ENCODE measurements at regions of chr2 and their contacts with region 1.

Region 1: DNA sequence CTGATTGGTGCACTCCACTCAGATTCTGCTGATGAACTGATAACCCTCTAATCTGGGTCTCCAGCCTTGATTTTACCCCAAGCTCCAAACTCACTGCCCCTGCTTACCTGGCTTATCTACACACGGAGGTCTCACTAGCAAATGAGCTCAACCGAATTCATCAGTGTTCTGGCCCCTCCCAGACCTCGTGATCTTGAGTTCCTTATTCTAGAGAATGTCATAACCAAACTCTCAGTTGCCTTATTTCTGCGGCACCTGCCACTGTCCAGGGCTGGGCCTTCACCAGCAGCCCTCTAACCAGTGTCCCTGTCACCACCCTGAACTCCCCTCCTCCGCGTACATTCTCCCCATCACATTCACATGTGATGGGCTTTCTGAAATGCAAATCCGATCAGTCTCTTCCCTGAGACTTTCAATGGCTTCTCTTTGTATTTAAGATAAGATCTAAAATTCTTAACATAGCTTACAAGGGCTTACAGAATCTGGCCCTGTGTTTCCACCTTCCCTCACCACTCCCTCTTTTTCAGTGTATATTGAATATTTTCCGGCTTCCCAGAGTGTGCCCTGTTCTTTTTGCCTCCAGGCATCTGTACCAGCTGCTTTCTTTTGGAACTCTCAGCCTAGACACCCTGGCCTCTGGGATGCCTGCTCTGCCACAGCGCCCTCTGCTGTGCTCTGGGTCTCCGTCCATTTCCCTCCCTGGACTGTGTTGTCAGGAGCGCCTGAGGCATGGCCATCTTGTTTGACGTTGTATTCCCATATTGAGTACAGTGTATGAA is 31.1 kb downstream of the NAB1 start:
- DNase-seq: peak; percentile 55
- ATAC-seq: no peak
- H3K4me3 Mint-ChIP-seq: peak overlapping the region; percentile 9
- H3K27ac Mint-ChIP-seq: peak overlapping the region; percentile 72
- H3K4me1 Mint-ChIP-seq: peaks cover 51% of the 10 kb centered on the region
- H3K27me3 Mint-ChIP-seq: no peaks in the 10 kb centered on the region
- CTCF ChIP-seq: peak; percentile 72

Region 2: GRCh38 chr2:190408538-190409271 is 271.3 kb before region 1 on chr2:
- CTCF ChIA-PET with region 1: interaction called, 8 read pairs
- POLR2A ChIA-PET with region 1: no interaction called
- intact Hi-C with region 1: loop called (anchors 10 kb)
- DNase-seq: peak; percentile 79
- ATAC-seq: peak; percentile 57
- H3K4me3 Mint-ChIP-seq: peak overlapping the region; percentile 88
- H3K27ac Mint-ChIP-seq: peak overlapping the region; percentile 95
- H3K4me1 Mint-ChIP-seq: peaks cover 34% of the 10 kb centered on the region
- H3K27me3 Mint-ChIP-seq: no peaks in the 10 kb centered on the region
- CTCF ChIP-seq: no peak

Region 3: GRCh38 chr2:190583507-190584337 is 96.3 kb before region 1 on chr2:
- CTCF ChIA-PET with region 1: no interaction called
- POLR2A ChIA-PET with region 1: no interaction called
- intact Hi-C with region 1: no loop called
- DNase-seq: no peak
- ATAC-seq: no peak
- H3K4me3 Mint-ChIP-seq: no peak overlapping the region
- H3K27ac Mint-ChIP-seq: no peak overlapping the region
- H3K4me1 Mint-ChIP-seq: peaks cover 6% of the 10 kb centered on the region
- H3K27me3 Mint-ChIP-seq: no peaks in the 10 kb centered on the region
- CTCF ChIP-seq: no peak

Region 4: GRCh38 chr2:190648289-190649034 is 31.5 kb before region 1 on chr2:
- CTCF ChIA-PET with region 1: interaction called, 26 read pairs
- POLR2A ChIA-PET with region 1: interaction called, 8 read pairs
- intact Hi-C with region 1: loop called (anchors 2 kb)
- DNase-seq: peak; percentile 78
- ATAC-seq: peak; percentile 65
- H3K4me3 Mint-ChIP-seq: peak overlapping the region; percentile 68
- H3K27ac Mint-ChIP-seq: peak overlapping the region; percentile 73
- H3K4me1 Mint-ChIP-seq: peaks cover 30% of the 10 kb centered on the region
- H3K27me3 Mint-ChIP-seq: no peaks in the 10 kb centered on the region
- CTCF ChIP-seq: no peak

Region 5: GRCh38 chr2:190662754-190663153 is 17.2 kb before region 1 on chr2:
- CTCF ChIA-PET with region 1: interaction called, 10 read pairs
- POLR2A ChIA-PET with region 1: interaction called, 4 read pairs
- intact Hi-C with region 1: no loop called
- DNase-seq: no peak
- ATAC-seq: no peak
- H3K4me3 Mint-ChIP-seq: no peak overlapping the region
- H3K27ac Mint-ChIP-seq: no peak overlapping the region
- H3K4me1 Mint-ChIP-seq: peaks cover 53% of the 10 kb centered on the region
- H3K27me3 Mint-ChIP-seq: no peaks in the 10 kb centered on the region
- CTCF ChIP-seq: no peak

Region 6: GRCh38 chr2:190695739-190696138 is 15.7 kb after region 1 on chr2:
- CTCF ChIA-PET with region 1: interaction called, 52 read pairs
- POLR2A ChIA-PET with region 1: interaction called, 5 read pairs
- intact Hi-C with region 1: no loop called
- DNase-seq: peak; percentile 65
- ATAC-seq: peak; percentile 91
- H3K4me3 Mint-ChIP-seq: no peak overlapping the region
- H3K27ac Mint-ChIP-seq: peak overlapping the region; percentile 61
- H3K4me1 Mint-ChIP-seq: peaks cover 30% of the 10 kb centered on the region
- H3K27me3 Mint-ChIP-seq: no peaks in the 10 kb centered on the region
- CTCF ChIP-seq: no peak

Region 7: DNA sequence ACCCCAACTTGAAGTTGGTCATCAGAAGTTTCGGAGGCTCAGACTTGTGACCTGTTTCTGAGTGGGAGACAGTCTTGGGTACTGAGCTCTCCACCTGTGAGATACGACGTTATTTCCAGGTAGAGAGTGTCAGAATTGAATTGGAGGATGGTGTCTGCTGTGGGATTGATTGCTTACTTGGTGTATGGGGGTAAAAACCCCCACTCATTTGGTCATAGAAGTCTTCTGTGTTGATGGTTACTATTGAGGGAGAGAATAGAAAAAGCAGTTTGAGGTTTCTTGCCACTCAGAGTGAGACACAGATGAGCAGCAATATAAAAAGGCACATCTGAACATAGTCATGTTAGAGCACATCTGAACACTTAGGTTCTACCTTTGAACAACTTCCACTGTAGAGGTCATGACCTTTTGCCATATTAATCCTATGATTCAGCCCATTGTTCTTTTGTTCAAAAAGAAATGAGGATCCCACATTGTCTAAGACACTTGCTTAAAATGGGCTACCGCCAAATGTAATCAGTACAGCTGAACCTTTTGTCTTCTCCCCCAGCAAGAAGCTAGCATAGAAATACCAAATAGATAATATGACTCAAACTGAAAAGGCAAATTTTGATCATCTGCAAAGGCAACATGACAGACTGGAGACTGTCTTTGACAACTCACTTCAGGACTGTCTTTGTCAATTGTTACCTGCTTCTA is 42.2 kb after region 1 on chr2:
- CTCF ChIA-PET with region 1: interaction called, 4 read pairs
- POLR2A ChIA-PET with region 1: interaction called, 8 read pairs
- intact Hi-C with region 1: loop called (anchors 1 kb)
- DNase-seq: peak; percentile 51
- ATAC-seq: peak; percentile 68
- H3K4me3 Mint-ChIP-seq: peak overlapping the region; percentile 63
- H3K27ac Mint-ChIP-seq: peak overlapping the region; percentile 95
- H3K4me1 Mint-ChIP-seq: peaks cover 77% of the 10 kb centered on the region
- H3K27me3 Mint-ChIP-seq: no peaks in the 10 kb centered on the region
- CTCF ChIP-seq: no peak

Measured in activated CD8-positive, alpha-beta T cell treated with anti-CD3 and anti-CD28 coated beads for 36 hours (primary cell).